ENCODE measurements at regions of chr3 and their contacts with region 1.

Region 1: GRCh38 chr3:101561630-101562328 is at the start of gene TRMT10C:
- DNase-seq: peak; percentile 96
- ATAC-seq: peak; percentile 98
- H3K4me3 Mint-ChIP-seq: peak within 1 kb of the TSS; percentile 93
- H3K27ac Mint-ChIP-seq: peak within 1 kb of the TSS; percentile 96
- H3K4me1 Mint-ChIP-seq: peaks cover 42% of the 10 kb centered on the region
- H3K27me3 Mint-ChIP-seq: peaks cover 4% of the 10 kb centered on the region
- total RNA-seq, gene TRMT10C: 54.3 to 55.4 TPM

Region 2: GRCh38 chr3:101466465-101467309 is 95.1 kb before region 1 on chr3:
- CTCF ChIA-PET with region 1: no interaction called
- POLR2A ChIA-PET with region 1: no interaction called
- intact Hi-C with region 1: loop called in 1 of 2 experiments (anchors 5 kb)
- DNase-seq: peak; percentile 82
- ATAC-seq: peak; percentile 70
- H3K4me3 Mint-ChIP-seq: peak overlapping the region; percentile 54
- H3K27ac Mint-ChIP-seq: peak overlapping the region; percentile 86
- H3K4me1 Mint-ChIP-seq: peaks cover 62% of the 10 kb centered on the region
- H3K27me3 Mint-ChIP-seq: no peaks in the 10 kb centered on the region

Region 3: DNA sequence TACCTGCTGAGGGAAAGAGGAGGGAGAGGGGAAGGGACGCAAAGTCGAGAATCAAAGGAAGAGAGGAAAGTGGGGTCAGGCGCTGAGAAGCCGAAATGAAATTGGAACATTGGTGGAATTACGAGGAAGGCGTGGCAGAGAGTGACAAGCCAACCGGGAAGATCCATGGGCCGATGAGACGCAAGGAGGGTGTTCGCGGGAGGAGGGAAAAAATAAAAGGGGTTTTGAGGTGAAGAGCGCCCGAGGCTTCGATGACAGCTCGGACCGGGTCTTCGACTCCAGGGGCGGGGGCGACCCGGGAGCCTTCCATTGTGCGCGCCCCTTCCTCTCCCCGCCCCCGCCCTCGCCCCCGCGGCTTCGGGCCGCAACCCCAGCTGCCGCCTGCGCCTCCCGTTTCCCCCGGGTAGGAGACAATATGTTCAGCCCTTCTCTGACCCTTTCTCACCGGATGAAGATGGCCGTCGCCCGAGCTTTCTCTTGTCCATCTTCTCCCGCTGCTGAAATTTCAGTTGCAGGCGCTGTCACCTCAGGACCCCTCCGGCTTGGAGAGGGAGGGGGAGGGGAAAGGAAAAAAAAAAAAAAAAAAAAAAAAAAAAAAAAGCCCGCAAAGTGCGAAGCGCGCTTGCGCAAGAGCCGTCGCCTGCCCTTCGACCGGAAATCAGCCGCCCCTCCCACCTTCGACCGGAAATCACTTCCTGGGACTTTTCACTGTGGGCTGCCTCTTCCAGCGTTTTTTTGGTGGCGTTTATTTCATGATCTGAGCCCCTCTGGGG is 48.9 kb before region 1 on chr3 and contains the start of gene SENP7:
- CTCF ChIA-PET with region 1: interaction called, 3 read pairs
- POLR2A ChIA-PET with region 1: interaction called, 3 read pairs
- intact Hi-C with region 1: loop called (anchors 1 kb)
- DNase-seq: peak; percentile 88
- ATAC-seq: peak; percentile 49
- H3K4me3 Mint-ChIP-seq: peak within 1 kb of the TSS; percentile 85
- H3K27ac Mint-ChIP-seq: peak within 1 kb of the TSS; percentile 96
- H3K4me1 Mint-ChIP-seq: peaks cover 53% of the 10 kb centered on the region
- H3K27me3 Mint-ChIP-seq: no peaks in the 10 kb centered on the region
- total RNA-seq, gene SENP7: 12.3 to 12.9 TPM

Region 4: GRCh38 chr3:101518421-101518871 is 43.3 kb before region 1 on chr3:
- CTCF ChIA-PET with region 1: interaction called, 4 read pairs
- POLR2A ChIA-PET with region 1: interaction called, 14 read pairs
- intact Hi-C with region 1: loop called (anchors 1 kb)
- DNase-seq: peak; percentile 67
- ATAC-seq: peak; percentile 93
- H3K4me3 Mint-ChIP-seq: peak overlapping the region; percentile 63
- H3K27ac Mint-ChIP-seq: peak overlapping the region; percentile 92
- H3K4me1 Mint-ChIP-seq: peaks cover 58% of the 10 kb centered on the region
- H3K27me3 Mint-ChIP-seq: no peaks in the 10 kb centered on the region

Region 5: GRCh38 chr3:101685870-101686412 is 124.2 kb after region 1 on chr3:
- CTCF ChIA-PET with region 1: no interaction called
- POLR2A ChIA-PET with region 1: interaction called, 5 read pairs
- intact Hi-C with region 1: loop called in 1 of 2 experiments (anchors 1 kb)
- DNase-seq: no peak
- ATAC-seq: no peak
- H3K4me3 Mint-ChIP-seq: peak overlapping the region; percentile 100
- H3K27ac Mint-ChIP-seq: peak overlapping the region; percentile 99
- H3K4me1 Mint-ChIP-seq: peaks cover 45% of the 10 kb centered on the region
- H3K27me3 Mint-ChIP-seq: no peaks in the 10 kb centered on the region